Activated CD4-positive, alpha-beta T cell treated with anti-CD3 and anti-CD28 coated beads, Interleukin-2, amount 10 ng/mL, durations not matched to agents 7 days and 5 days (primary cell): ENCODE measurements at regions of chr1 and their contacts with region 1.

Region 1: DNA sequence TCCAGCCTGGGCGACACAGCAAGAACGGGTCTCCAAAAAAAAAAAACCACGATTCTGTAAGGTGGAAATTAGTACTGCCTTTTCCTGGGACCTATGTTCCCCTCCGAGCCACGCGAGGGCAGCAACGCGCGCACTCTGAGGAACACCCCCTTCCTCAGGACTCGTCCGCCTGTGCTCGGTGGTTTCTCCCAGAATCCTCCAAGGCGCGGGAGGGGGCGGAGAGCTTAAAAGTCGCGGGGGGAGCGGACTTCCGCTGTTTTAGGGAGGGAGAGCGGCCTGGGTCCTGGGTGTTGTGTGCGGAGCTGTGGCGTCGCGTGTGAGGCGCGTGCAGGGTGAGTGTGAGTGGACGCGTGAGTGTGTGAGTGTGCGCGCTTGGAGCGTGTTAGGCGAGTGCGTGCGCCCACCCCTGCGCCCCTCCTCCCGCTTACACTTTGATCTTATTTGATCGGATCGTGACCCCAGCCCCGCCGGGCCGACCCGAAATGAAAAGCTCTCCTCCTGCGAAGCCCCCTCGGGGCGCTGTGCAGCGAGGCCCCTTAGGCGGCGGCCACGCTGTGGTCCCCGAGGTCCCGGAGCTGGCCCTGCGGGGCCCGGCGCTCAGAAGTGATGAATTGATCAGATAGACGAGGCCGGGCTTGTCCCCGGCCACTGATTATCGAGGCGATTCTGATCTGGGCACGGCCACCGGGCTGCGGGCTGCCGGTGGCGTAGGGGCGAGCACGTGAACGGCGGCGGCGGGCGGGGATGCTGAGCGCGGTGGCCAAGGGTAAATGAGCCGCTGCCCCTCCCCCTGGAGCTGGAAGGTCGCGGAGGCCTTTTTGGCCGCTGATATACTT is 9.6 kb downstream of the TMEM167B start:
- DNase-seq: peak; percentile 98
- H3K4me3 Mint-ChIP-seq: peak overlapping the region; percentile 100
- H3K27ac Mint-ChIP-seq: peak overlapping the region; percentile 99
- H3K4me1 Mint-ChIP-seq: peaks cover 14% of the 10 kb centered on the region
- H3K27me3 Mint-ChIP-seq: no peaks in the 10 kb centered on the region

Region 2: GRCh38 chr1:109075531-109076490 is 24.3 kb before region 1 on chr1 and contains the start of gene TAF13:
- CTCF ChIA-PET with region 1: interaction called, 11 read pairs
- POLR2A ChIA-PET with region 1: interaction called, 4 read pairs
- DNase-seq: peak; percentile 88
- H3K4me3 Mint-ChIP-seq: peak within 1 kb of the TSS; percentile 89
- H3K27ac Mint-ChIP-seq: peak within 1 kb of the TSS; percentile 94
- H3K4me1 Mint-ChIP-seq: peaks cover 20% of the 10 kb centered on the region
- H3K27me3 Mint-ChIP-seq: no peaks in the 10 kb centered on the region
- total RNA-seq, gene TAF13: 16.0 to 17.5 TPM

Region 3: GRCh38 chr1:109083923-109084322 is 16.2 kb before region 1 on chr1:
- CTCF ChIA-PET with region 1: interaction called, 18 read pairs
- POLR2A ChIA-PET with region 1: no interaction called
- DNase-seq: no peak
- H3K4me3 Mint-ChIP-seq: no peak overlapping the region
- H3K27ac Mint-ChIP-seq: no peak overlapping the region
- H3K4me1 Mint-ChIP-seq: peaks cover 7% of the 10 kb centered on the region
- H3K27me3 Mint-ChIP-seq: no peaks in the 10 kb centered on the region

Region 4: GRCh38 chr1:109112652-109113285 is 12.6 kb after region 1 on chr1:
- CTCF ChIA-PET with region 1: interaction called, 77 read pairs
- POLR2A ChIA-PET with region 1: interaction called, 4 read pairs
- DNase-seq: peak; percentile 90
- H3K4me3 Mint-ChIP-seq: peak overlapping the region; percentile 76
- H3K27ac Mint-ChIP-seq: peak overlapping the region; percentile 81
- H3K4me1 Mint-ChIP-seq: peaks cover 30% of the 10 kb centered on the region
- H3K27me3 Mint-ChIP-seq: peaks cover 22% of the 10 kb centered on the region